GM12878 (cell line): ENCODE measurements at regions of chr5 and their contacts with region 1.

Region 1: GRCh38 chr5:80255732-80256479 is at the start of gene SERINC5:
- DNase-seq: no peak
- ATAC-seq: peak; percentile 82
- H3K4me3 ChIP-seq: peak within 1 kb of the TSS; percentile 98
- H3K27ac ChIP-seq: peak within 1 kb of the TSS; percentile 94
- H3K4me1 ChIP-seq: peaks cover 8% of the 10 kb centered on the region
- H3K27me3 ChIP-seq: no peaks in the 10 kb centered on the region
- CTCF ChIP-seq: no peak
- EP300 ChIP-seq: 0 out of 4 replicates have a peak, but pooled peaks of 1 of the 2 experiments have one; percentile 20
- POLR2A ChIP-seq: peak; percentile 97
- RAD21 ChIP-seq: no peak
- polyA plus RNA-seq, gene SERINC5: 0.66 to 1.9 TPM

Region 2: GRCh38 chr5:79886925-79887655 is 368.8 kb before region 1 on chr5:
- CTCF ChIA-PET with region 1: no interaction called
- POLR2A ChIA-PET with region 1: no interaction called
- RAD21 ChIA-PET with region 1: no interaction called
- SMC1A ChIA-PET with region 1: no interaction called
- in situ Hi-C with region 1: no loop called
- intact Hi-C with region 1: no loop called
- DNase-seq: peak; percentile 7
- ATAC-seq: no peak
- H3K4me3 ChIP-seq: no peak overlapping the region
- H3K27ac ChIP-seq: no peak overlapping the region
- H3K4me1 ChIP-seq: no peaks in the 10 kb centered on the region
- H3K27me3 ChIP-seq: no peaks in the 10 kb centered on the region; a peak in 1 of 4 replicates
- CTCF ChIP-seq: no peak
- EP300 ChIP-seq: no peak
- POLR2A ChIP-seq: no peak
- RAD21 ChIP-seq: no peak

Region 3: DNA sequence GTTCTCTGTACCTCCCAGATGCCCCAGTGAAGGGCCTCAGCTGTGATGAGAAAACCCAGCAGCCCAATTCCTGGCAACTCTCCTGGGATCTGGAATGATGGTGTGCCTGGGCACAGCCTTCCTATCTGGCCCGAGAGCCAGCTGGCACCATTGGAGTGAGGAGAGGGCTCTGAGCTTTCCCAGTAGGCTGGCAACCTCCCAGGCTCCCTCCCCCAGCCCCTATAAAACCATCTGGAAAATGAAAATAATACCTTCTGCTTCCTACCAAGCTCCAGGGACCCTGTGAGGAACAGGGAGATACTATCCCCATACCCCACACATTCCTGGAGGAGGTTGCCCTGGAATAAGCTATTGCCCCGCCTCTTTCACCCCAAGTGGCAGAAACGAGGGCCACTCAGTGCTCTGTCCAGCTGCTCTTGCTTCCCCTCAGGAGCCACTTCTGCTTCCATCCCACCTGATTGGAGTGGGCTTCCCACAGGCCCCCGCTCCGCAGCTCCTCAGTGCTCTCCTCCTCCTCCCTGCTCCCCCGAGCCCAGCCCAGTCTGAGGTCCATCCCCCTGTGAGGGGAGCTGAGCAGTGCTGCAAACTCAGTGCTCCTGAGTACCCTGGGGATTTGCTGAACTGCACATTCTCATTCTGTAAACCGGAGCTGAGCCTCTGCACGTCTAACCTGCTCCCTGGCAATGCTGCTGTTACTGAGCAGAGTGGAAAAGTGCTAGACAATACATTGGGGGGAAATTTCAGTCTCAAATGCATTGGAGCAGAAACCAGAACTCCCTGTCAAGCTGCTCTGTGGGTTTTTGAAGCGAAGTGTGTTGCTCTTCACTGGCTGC is 146.0 kb before region 1 on chr5:
- CTCF ChIA-PET with region 1: no interaction called
- POLR2A ChIA-PET with region 1: interaction called, 7 read pairs
- RAD21 ChIA-PET with region 1: interaction called, 19 read pairs
- SMC1A ChIA-PET with region 1: interaction called, 11 read pairs
- in situ Hi-C with region 1: no loop called
- intact Hi-C with region 1: no loop called
- DNase-seq: peak; percentile 52
- ATAC-seq: peak; percentile 86
- H3K4me3 ChIP-seq: no peak overlapping the region
- H3K27ac ChIP-seq: no peak overlapping the region
- H3K4me1 ChIP-seq: peaks cover 11% of the 10 kb centered on the region
- H3K27me3 ChIP-seq: no peaks in the 10 kb centered on the region
- CTCF ChIP-seq: no peak
- EP300 ChIP-seq: no peak
- POLR2A ChIP-seq: no peak
- RAD21 ChIP-seq: no peak

Region 4: DNA sequence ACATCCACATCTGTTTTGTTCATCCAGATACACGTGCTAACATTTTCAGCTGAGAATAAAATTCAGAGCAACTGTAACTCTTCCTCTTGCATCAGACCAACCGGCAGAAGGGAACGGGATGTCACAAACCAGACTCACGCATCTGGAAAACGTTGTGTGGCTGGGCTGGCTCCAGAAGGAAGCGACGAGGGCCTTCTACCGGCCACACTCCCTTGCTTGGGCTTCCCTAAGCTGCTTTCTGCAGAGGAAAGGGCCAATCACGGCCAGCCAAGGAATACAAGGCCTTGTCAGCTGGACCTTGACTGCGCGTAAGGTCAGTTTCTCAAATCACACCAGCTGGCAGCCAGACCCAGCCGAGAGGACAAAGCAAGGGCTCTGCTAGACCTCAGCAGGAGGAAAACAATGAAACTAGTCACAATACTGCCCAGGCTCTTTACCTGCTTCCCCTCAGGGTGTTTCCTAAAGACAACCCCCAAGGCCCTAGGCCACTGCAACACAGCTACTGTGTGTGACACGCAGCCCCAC is 114.7 kb before region 1 on chr5:
- CTCF ChIA-PET with region 1: interaction called, 4 read pairs
- POLR2A ChIA-PET with region 1: interaction called, 11 read pairs
- RAD21 ChIA-PET with region 1: interaction called, 35 read pairs
- SMC1A ChIA-PET with region 1: interaction called, 8 read pairs
- in situ Hi-C with region 1: no loop called
- intact Hi-C with region 1: no loop called
- DNase-seq: no peak
- ATAC-seq: peak; percentile 32
- H3K4me3 ChIP-seq: no peak overlapping the region
- H3K27ac ChIP-seq: no peak overlapping the region
- H3K4me1 ChIP-seq: peaks cover 32% of the 10 kb centered on the region
- H3K27me3 ChIP-seq: no peaks in the 10 kb centered on the region
- CTCF ChIP-seq: no peak
- EP300 ChIP-seq: no peak
- POLR2A ChIP-seq: no peak
- RAD21 ChIP-seq: no peak

Region 5: DNA sequence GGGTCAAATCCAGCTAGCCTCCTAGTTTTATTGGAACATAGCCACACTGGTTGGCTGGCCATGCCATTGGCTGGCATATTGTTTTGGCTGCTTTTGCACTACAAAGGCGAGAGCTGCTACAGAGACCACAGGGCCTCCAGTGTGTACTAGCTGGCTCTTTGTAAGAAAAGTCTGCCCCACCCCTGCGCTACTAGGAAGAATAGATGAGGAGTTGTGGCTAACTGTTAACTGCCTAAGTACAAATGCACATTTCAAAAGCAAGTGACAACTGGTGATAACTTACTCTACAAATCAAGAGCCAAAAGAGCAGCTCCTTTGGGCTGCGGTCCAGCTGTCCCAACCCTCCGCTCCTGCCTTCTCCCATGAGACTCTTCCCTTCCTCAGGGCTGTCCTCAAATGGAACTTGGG is 63.9 kb before region 1 on chr5:
- CTCF ChIA-PET with region 1: interaction called, 9 read pairs
- POLR2A ChIA-PET with region 1: interaction called, 12 read pairs
- RAD21 ChIA-PET with region 1: interaction called, 14 read pairs
- SMC1A ChIA-PET with region 1: interaction called, 5 read pairs
- in situ Hi-C with region 1: no loop called
- intact Hi-C with region 1: no loop called
- DNase-seq: no peak
- ATAC-seq: peak; percentile 24
- H3K4me3 ChIP-seq: no peak overlapping the region
- H3K27ac ChIP-seq: no peak overlapping the region
- H3K4me1 ChIP-seq: peaks cover 18% of the 10 kb centered on the region; the same call in 1 of the 2 replicates
- H3K27me3 ChIP-seq: no peaks in the 10 kb centered on the region
- CTCF ChIP-seq: no peak
- EP300 ChIP-seq: no peak
- POLR2A ChIP-seq: no peak
- RAD21 ChIP-seq: no peak

Region 6: DNA sequence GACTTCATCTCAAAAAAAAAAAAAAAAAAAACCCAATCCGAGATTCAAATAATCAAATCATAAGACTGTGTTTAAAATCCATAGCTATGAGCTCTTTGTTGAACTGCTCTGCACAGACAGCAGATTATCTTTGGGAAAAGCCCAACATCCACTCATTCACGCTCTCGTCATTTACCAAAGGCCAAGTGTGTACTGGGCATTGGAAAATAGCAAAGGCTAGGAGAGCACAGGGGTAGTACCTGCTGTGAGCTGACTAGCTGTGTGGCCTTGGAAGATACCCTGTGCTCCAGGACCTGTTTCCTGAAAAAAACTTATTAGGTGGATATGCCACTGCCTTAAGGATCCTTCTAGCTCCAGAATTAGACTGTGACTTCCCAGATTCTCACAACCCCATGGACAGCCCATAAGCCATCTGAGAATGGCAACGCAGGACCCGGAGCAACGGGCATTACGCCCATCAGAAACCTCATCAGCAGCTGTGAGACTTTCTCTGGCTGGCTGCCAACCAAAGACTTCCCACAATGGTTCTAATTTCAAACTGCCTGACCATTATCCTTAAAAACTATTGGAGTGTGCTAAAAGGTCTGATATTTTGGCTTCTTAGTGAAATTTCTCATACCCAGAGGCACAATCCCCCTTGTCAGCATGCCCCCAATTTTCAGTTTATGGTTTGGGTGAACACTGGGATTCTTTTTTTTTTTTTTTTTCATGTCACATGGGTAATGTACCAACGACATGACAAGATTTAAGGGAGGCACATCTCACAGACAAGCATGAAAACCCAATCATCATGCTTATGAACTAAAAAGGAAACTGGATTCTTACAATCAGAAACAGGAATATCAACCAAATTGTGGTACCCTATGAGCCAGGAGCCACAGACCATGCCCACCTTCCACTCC is 16.9 kb before region 1 on chr5:
- CTCF ChIA-PET with region 1: interaction called, 5 read pairs
- POLR2A ChIA-PET with region 1: interaction called, 93 read pairs
- RAD21 ChIA-PET with region 1: interaction called, 3 read pairs
- SMC1A ChIA-PET with region 1: interaction called, 70 read pairs
- in situ Hi-C with region 1: no loop called
- intact Hi-C with region 1: no loop called
- DNase-seq: no peak
- ATAC-seq: peak; percentile 21; the same call in 1 of the 3 replicates
- H3K4me3 ChIP-seq: no peak overlapping the region
- H3K27ac ChIP-seq: no peak overlapping the region
- H3K4me1 ChIP-seq: no peaks in the 10 kb centered on the region
- H3K27me3 ChIP-seq: no peaks in the 10 kb centered on the region
- CTCF ChIP-seq: no peak
- EP300 ChIP-seq: no peak
- POLR2A ChIP-seq: no peak
- RAD21 ChIP-seq: no peak

Region 7: DNA sequence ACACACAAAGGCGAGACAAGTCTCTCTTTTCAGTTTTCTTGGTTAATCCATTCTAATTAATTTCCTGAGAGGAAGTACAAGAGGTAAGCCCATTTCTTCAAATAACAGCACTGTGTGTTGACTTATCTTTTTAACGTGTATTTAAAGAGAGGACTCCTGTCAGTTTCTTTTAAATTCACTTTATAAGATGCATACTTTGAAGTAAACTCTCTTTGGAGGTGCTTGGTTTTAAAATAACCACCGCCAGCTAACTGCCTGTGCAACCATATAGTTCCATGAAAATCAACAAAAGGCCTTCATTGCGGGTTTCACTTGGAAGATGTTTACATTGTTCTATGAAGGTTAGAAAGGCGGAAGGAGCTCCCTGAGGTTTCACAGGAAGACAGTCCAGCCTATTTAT is 13.0 kb after region 1 on chr5:
- CTCF ChIA-PET with region 1: interaction called, 3 read pairs
- POLR2A ChIA-PET with region 1: interaction called, 15 read pairs
- RAD21 ChIA-PET with region 1: interaction called, 9 read pairs
- SMC1A ChIA-PET with region 1: interaction called, 11 read pairs
- in situ Hi-C with region 1: no loop called
- intact Hi-C with region 1: no loop called
- DNase-seq: no peak
- ATAC-seq: no peak
- H3K4me3 ChIP-seq: no peak overlapping the region
- H3K27ac ChIP-seq: no peak overlapping the region
- H3K4me1 ChIP-seq: no peaks in the 10 kb centered on the region
- H3K27me3 ChIP-seq: no peaks in the 10 kb centered on the region
- CTCF ChIP-seq: no peak
- EP300 ChIP-seq: no peak
- POLR2A ChIP-seq: no peak
- RAD21 ChIP-seq: no peak

Region 8: GRCh38 chr5:80275347-80275746 is 19.4 kb after region 1 on chr5:
- CTCF ChIA-PET with region 1: interaction called, 9 read pairs
- POLR2A ChIA-PET with region 1: interaction called, 3 read pairs
- RAD21 ChIA-PET with region 1: interaction called, 5 read pairs
- SMC1A ChIA-PET with region 1: interaction called, 11 read pairs
- in situ Hi-C with region 1: no loop called
- intact Hi-C with region 1: no loop called
- DNase-seq: no peak
- ATAC-seq: peak; percentile 80
- H3K4me3 ChIP-seq: no peak overlapping the region
- H3K27ac ChIP-seq: no peak overlapping the region
- H3K4me1 ChIP-seq: no peaks in the 10 kb centered on the region
- H3K27me3 ChIP-seq: no peaks in the 10 kb centered on the region
- CTCF ChIP-seq: peak; percentile 52 to 73 (median 60); a peak in 4 of 6 replicates
- EP300 ChIP-seq: no peak
- POLR2A ChIP-seq: no peak
- RAD21 ChIP-seq: peak; percentile 92

Region 9: GRCh38 chr5:80736730-80737129 is 480.8 kb after region 1 on chr5:
- CTCF ChIA-PET with region 1: no interaction called
- POLR2A ChIA-PET with region 1: no interaction called
- RAD21 ChIA-PET with region 1: no interaction called
- SMC1A ChIA-PET with region 1: no interaction called
- in situ Hi-C with region 1: no loop called
- intact Hi-C with region 1: no loop called
- DNase-seq: no peak
- ATAC-seq: no peak
- H3K4me3 ChIP-seq: no peak overlapping the region
- H3K27ac ChIP-seq: no peak overlapping the region
- H3K4me1 ChIP-seq: no peaks in the 10 kb centered on the region
- H3K27me3 ChIP-seq: no peaks in the 10 kb centered on the region
- CTCF ChIP-seq: no peak
- EP300 ChIP-seq: no peak
- POLR2A ChIP-seq: no peak
- RAD21 ChIP-seq: no peak